ENCODE measurements at regions of chr4 and their contacts with region 1.

Region 1: DNA sequence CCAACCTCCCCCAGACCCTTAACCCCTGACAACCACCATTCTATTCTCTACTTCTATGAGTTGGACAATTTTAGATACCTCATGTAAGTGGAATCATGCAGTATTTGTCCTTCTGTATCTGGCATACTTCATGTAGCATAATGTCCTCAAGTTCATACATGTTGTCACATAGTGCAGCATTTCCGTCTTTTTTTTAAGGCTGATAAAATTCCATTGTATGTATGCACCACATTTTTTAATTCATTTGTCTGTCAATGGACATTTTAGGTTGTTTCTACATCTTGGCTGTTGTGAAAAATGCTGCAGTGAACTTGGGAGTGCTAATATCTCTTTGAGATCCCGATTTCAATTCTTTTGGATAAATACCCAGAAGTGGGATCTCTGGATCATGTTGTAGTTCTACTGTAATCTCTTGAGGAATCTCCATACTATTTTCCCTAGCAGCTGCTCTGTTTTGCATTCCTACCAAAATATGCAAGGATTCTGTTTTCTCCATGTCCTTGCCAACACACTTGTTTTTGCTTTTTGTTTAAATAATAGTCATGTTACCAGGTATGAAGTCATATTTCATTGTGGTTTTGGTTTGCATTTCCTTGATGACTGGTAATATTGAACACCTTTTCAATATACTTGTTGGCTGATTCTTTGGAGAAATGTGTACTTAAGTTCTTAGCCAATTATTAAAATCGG is 48.8 kb upstream of the ADAD1 start:
- DNase-seq: no peak
- H3K4me3 ChIP-seq: no peak overlapping the region
- H3K27ac ChIP-seq: no peak overlapping the region
- H3K4me1 ChIP-seq: no peaks in the 10 kb centered on the region
- H3K27me3 ChIP-seq: no peaks in the 10 kb centered on the region
- CTCF ChIP-seq: no peak

Region 2: GRCh38 chr4:121784975-121785374 is 545.0 kb before region 1 on chr4:
- intact Hi-C with region 1: no loop called
- DNase-seq: no peak
- H3K4me3 ChIP-seq: no peak overlapping the region
- H3K27ac ChIP-seq: no peak overlapping the region
- H3K4me1 ChIP-seq: no peaks in the 10 kb centered on the region
- H3K27me3 ChIP-seq: no peaks in the 10 kb centered on the region
- CTCF ChIP-seq: no peak

Region 3: GRCh38 chr4:121842862-121843261 is 487.2 kb before region 1 on chr4:
- intact Hi-C with region 1: no loop called
- DNase-seq: no peak
- H3K4me3 ChIP-seq: no peak overlapping the region
- H3K27ac ChIP-seq: no peak overlapping the region
- H3K4me1 ChIP-seq: no peaks in the 10 kb centered on the region
- H3K27me3 ChIP-seq: no peaks in the 10 kb centered on the region
- CTCF ChIP-seq: no peak

Region 4: DNA sequence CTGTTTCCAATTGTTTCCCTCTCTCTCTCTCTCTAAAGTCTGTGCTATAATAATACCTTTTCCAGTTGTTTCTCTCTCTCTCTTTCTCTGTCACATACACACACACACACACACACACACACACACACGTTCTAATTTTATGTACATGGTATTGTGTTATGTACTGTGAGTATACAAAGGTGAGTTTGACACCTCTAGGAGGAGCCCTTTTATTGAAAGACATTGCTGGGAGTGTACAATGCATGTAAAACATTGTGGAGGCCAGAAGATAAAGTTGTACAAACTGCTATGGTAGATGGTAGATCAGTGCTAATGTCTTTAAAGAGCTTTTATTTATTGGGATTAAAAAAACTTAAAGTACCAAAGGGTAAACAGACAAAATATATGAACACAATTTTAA is 124.3 kb before region 1 on chr4:
- intact Hi-C with region 1: loop called (anchors 10 kb)
- DNase-seq: no peak
- H3K4me3 ChIP-seq: no peak overlapping the region
- H3K27ac ChIP-seq: no peak overlapping the region
- H3K4me1 ChIP-seq: no peaks in the 10 kb centered on the region
- H3K27me3 ChIP-seq: no peaks in the 10 kb centered on the region
- CTCF ChIP-seq: no peak

Measured in ascending aorta (tissue), 2 donors.